AG04450 (cell line): ENCODE measurements at regions of chr6 and their contacts with region 1.

Region 1: GRCh38 chr6:75208298-75209183 is 2.7 kb upstream of the COL12A1 start:
- DNase-seq: peak; percentile 64
- H3K4me3 ChIP-seq: peak overlapping the region; percentile 41; the same call in 1 of the 2 replicates
- H3K27ac ChIP-seq: peak overlapping the region; percentile 61
- H3K27me3 ChIP-seq: no peaks in the 10 kb centered on the region
- CTCF ChIP-seq: peak; percentile 94

Region 2: DNA sequence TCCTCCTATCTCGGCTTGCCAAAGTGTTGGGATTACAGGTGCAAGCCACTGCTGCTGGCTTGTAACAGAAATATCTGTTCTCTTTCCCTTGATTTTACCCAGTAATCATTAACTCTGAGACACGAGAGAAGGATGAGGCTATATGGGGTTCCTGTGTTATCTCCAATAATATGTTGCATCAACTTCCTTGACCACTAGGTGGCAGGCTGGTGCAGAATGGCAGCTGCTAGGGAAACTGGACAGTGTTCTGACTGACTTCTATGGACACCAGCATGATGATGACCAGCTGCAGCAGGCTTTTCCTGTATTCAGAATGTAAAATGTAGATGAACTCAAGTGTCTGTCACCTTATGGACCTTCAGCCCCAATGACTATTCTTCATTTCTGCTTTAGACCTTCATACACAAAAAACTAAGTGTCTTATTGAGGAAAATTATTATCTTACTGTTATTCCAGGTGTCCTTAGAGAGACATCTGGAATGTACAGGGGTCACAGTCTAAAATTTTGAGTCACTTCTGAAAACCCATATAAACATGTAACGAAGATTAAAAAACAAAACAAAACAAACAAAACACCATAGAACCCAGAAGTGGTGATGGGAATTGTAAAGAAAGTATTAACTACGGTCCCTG is 1533.0 kb before region 1 on chr6:
- CTCF ChIA-PET with region 1: interaction called, 18 read pairs
- POLR2A ChIA-PET with region 1: no interaction called
- DNase-seq: peak; percentile 61
- H3K4me3 ChIP-seq: no peak overlapping the region
- H3K27ac ChIP-seq: no peak overlapping the region
- H3K27me3 ChIP-seq: no peaks in the 10 kb centered on the region
- CTCF ChIP-seq: peak; percentile 93

Region 3: GRCh38 chr6:73747289-73747688 is 1461.3 kb before region 1 on chr6:
- CTCF ChIA-PET with region 1: interaction called, 32 read pairs
- POLR2A ChIA-PET with region 1: no interaction called
- DNase-seq: no peak
- H3K4me3 ChIP-seq: no peak overlapping the region
- H3K27ac ChIP-seq: no peak overlapping the region
- H3K27me3 ChIP-seq: no peaks in the 10 kb centered on the region
- CTCF ChIP-seq: no peak

Region 4: DNA sequence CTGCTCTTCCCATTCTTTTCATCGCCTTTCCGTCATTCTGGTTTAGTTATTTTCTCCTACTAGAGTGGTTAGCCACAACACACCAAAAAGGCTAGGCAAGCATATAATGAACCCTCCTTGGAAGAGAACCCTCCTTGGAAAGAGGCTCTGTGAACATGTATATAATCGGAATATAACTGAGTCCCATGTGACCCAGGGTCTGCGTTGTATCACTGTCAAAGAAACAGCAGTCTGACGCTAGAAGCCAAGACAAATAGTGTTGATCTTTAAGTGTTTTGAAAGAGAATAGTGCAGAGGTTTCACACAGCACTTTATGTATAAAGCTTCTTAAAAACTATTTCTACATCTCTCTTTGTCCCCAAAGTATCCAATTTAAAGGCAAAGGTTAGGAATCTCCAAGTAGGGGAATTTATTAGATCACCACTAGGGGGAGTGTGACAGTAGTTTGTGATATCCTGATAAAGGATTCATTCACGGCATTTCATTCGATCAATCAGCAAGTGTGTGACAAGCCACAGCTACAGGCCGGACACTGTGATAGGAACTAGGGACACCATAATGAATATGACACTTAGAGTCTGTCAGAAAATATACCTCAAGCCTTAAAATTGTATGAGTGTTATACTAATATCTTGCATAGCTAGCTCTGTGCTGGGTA is 1117.3 kb before region 1 on chr6:
- CTCF ChIA-PET with region 1: interaction called, 175 read pairs
- POLR2A ChIA-PET with region 1: no interaction called
- DNase-seq: no peak
- H3K4me3 ChIP-seq: no peak overlapping the region
- H3K27ac ChIP-seq: no peak overlapping the region
- H3K27me3 ChIP-seq: no peaks in the 10 kb centered on the region
- CTCF ChIP-seq: peak; percentile 69

Region 5: GRCh38 chr6:74891349-74891831 is 317.2 kb before region 1 on chr6:
- CTCF ChIA-PET with region 1: interaction called, 15 read pairs
- POLR2A ChIA-PET with region 1: no interaction called
- DNase-seq: peak; percentile 79
- H3K4me3 ChIP-seq: no peak overlapping the region
- H3K27ac ChIP-seq: no peak overlapping the region
- H3K27me3 ChIP-seq: no peaks in the 10 kb centered on the region
- CTCF ChIP-seq: no peak

Region 6: GRCh38 chr6:75397656-75398465 is 189.3 kb after region 1 on chr6:
- CTCF ChIA-PET with region 1: no interaction called
- POLR2A ChIA-PET with region 1: no interaction called
- DNase-seq: no peak
- H3K4me3 ChIP-seq: no peak overlapping the region
- H3K27ac ChIP-seq: no peak overlapping the region
- H3K27me3 ChIP-seq: no peaks in the 10 kb centered on the region
- CTCF ChIP-seq: no peak

Region 7: GRCh38 chr6:75546381-75546780 is 337.8 kb after region 1 on chr6:
- CTCF ChIA-PET with region 1: interaction called, 36 read pairs
- POLR2A ChIA-PET with region 1: no interaction called
- DNase-seq: no peak
- H3K4me3 ChIP-seq: no peak overlapping the region
- H3K27ac ChIP-seq: no peak overlapping the region
- H3K27me3 ChIP-seq: no peaks in the 10 kb centered on the region
- CTCF ChIP-seq: peak; percentile 31